HepG2 (cell line): ENCODE measurements at regions of chr1 and their contacts with region 1.

Region 1: GRCh38 chr1:173934440-173934839 is 17.3 kb upstream of the SERPINC1 start:
- DNase-seq: no peak
- ATAC-seq: no peak
- H3K4me3 ChIP-seq: no peak overlapping the region
- H3K27ac ChIP-seq: no peak overlapping the region
- H3K4me1 ChIP-seq: no peaks in the 10 kb centered on the region
- H3K27me3 ChIP-seq: no peaks in the 10 kb centered on the region
- CTCF ChIP-seq: no peak
- EP300 ChIP-seq: no peak
- POLR2A ChIP-seq: no peak
- RAD21 ChIP-seq: no peak

Region 2: GRCh38 chr1:173917635-173918493 is 16.6 kb before region 1 on chr1:
- CTCF ChIA-PET with region 1: no interaction called
- POLR2A ChIA-PET with region 1: interaction called, 10 read pairs
- in situ Hi-C with region 1: no loop called
- intact Hi-C with region 1: no loop called
- DNase-seq: no peak
- ATAC-seq: peak; percentile 52
- H3K4me3 ChIP-seq: peak overlapping the region; percentile 59 to 72 (median 65)
- H3K27ac ChIP-seq: peak overlapping the region; percentile 91
- H3K4me1 ChIP-seq: peaks cover 36% of the 10 kb centered on the region
- H3K27me3 ChIP-seq: no peaks in the 10 kb centered on the region
- CTCF ChIP-seq: no peak
- EP300 ChIP-seq: no peak
- POLR2A ChIP-seq: no peak
- RAD21 ChIP-seq: no peak